ENCODE measurements at regions of chr4 and their contacts with region 1.

Region 1: GRCh38 chr4:172202480-172203076 is 389.4 kb downstream of the GALNTL6 start:
- DNase-seq: peak; percentile 52
- H3K4me3 ChIP-seq: peak overlapping the region in 1 of 2 experiments; percentile 49; a peak in 1 of 4 replicates
- H3K27ac ChIP-seq: no peak overlapping the region
- H3K4me1 ChIP-seq: no peaks in the 10 kb centered on the region
- H3K27me3 ChIP-seq: no peaks in the 10 kb centered on the region
- CTCF ChIP-seq: peak; percentile 84
- EP300 ChIP-seq: no peak
- RAD21 ChIP-seq: peak; percentile 92

Region 2: GRCh38 chr4:170990989-170991589 is 1211.5 kb before region 1 on chr4:
- CTCF ChIA-PET with region 1: interaction called, 14 read pairs
- POLR2A ChIA-PET with region 1: no interaction called
- DNase-seq: peak; percentile 17
- H3K4me3 ChIP-seq: no peak overlapping the region; a peak in 1 of 4 replicates
- H3K27ac ChIP-seq: no peak overlapping the region
- H3K4me1 ChIP-seq: no peaks in the 10 kb centered on the region
- H3K27me3 ChIP-seq: no peaks in the 10 kb centered on the region
- CTCF ChIP-seq: peak; percentile 62
- EP300 ChIP-seq: no peak
- RAD21 ChIP-seq: peak; percentile 68

Region 3: GRCh38 chr4:171846232-171846631 is 356.3 kb before region 1 on chr4:
- CTCF ChIA-PET with region 1: interaction called, 12 read pairs
- POLR2A ChIA-PET with region 1: no interaction called
- DNase-seq: peak; percentile 37
- H3K4me3 ChIP-seq: peak overlapping the region in 1 of 2 experiments; percentile 43; a peak in 1 of 4 replicates
- H3K27ac ChIP-seq: no peak overlapping the region
- H3K4me1 ChIP-seq: no peaks in the 10 kb centered on the region
- H3K27me3 ChIP-seq: no peaks in the 10 kb centered on the region
- CTCF ChIP-seq: peak; percentile 73
- EP300 ChIP-seq: no peak
- RAD21 ChIP-seq: peak; percentile 85